Aorta (tissue), 5 donors: ENCODE measurements at regions of chr16 and their contacts with region 1.

Region 1: GRCh38 chr16:352547-353403 is at the start of gene AXIN1:
- DNase-seq: peak; percentile 99 to 100
- ATAC-seq: peak; percentile 95
- H3K4me3 ChIP-seq: peak within 1 kb of the TSS; percentile 67 to 82
- H3K27ac ChIP-seq: peak within 1 kb of the TSS in 1 of 2 donors; percentile 0
- H3K4me1 ChIP-seq: no peaks in the 10 kb centered on the region
- H3K27me3 ChIP-seq: no peaks in the 10 kb centered on the region
- total RNA-seq, gene AXIN1: 17.0 to 19.8 TPM

Region 2: GRCh38 chr16:234468-235305 is 118.1 kb before region 1 on chr16 and contains the start of gene FAM234A:
- intact Hi-C with region 1: loop called in 1 of 2 experiments (anchors 5 kb)
- DNase-seq: peak; percentile 96 to 98
- ATAC-seq: peak; percentile 97
- H3K4me3 ChIP-seq: peak within 1 kb of the TSS; percentile 65 to 93
- H3K27ac ChIP-seq: peak within 1 kb of the TSS; percentile 20 to 84
- H3K4me1 ChIP-seq: no peaks in the 10 kb centered on the region
- H3K27me3 ChIP-seq: no peaks in the 10 kb centered on the region
- total RNA-seq, gene FAM234A: 58.0 to 60.7 TPM

Region 3: GRCh38 chr16:370443-370842 is 17.7 kb after region 1 on chr16 and contains the start of gene MRPL28:
- intact Hi-C with region 1: no loop called
- DNase-seq: peak; percentile 96 to 98
- ATAC-seq: peak; percentile 92
- H3K4me3 ChIP-seq: no peak within 1 kb of the TSS
- H3K27ac ChIP-seq: no peak within 1 kb of the TSS
- H3K4me1 ChIP-seq: no peaks in the 10 kb centered on the region
- H3K27me3 ChIP-seq: no peaks in the 10 kb centered on the region
- total RNA-seq, gene MRPL28: 35.5 to 38.0 TPM

Region 4: DNA sequence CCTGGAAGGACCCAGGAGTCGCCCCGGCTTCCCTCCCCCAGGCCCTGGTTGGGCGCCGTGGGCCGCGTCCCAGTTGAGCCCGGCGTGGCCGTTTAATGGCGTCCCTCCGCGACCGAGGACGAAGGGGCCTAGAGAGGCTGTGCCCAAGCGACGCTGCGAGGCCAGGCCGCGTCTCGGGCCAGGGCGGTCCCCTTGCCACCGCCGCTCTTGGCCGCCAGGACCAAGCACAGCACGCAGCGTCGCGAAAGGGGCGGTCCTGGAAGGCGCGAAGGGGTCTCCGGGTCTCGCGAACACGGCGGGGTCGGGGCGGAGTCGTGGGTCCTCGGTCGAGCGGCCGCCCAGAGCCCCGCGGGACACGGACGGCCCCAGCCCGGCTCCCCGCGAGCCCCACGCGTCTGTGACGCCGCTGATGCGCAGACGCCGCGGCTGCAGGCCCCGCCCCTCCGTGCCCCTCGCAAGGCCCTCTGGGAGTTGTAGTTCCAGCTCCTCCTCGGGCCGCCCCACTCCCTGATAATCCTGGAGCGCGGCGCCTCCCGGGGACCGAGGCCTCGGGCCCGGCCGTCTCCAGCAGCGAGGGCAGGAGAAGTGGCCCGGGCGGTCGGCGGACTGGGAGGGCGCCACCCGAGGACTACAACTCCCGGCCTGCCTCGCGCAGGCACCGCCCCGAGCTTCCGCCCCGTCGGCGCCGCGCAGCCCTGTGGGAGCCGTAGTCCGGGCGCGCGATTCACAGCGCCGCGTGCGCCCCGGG is 174.4 kb after region 1 on chr16 and contains the start of gene CAPN15:
- intact Hi-C with region 1: loop called in 1 of 2 experiments (anchors 1 kb)
- DNase-seq: peak; percentile 92 to 95
- ATAC-seq: peak; percentile 94
- H3K4me3 ChIP-seq: peak within 1 kb of the TSS; percentile 73 to 84
- H3K27ac ChIP-seq: peak within 1 kb of the TSS in 1 of 2 donors; percentile 92
- H3K4me1 ChIP-seq: no peaks in the 10 kb centered on the region
- H3K27me3 ChIP-seq: no peaks in the 10 kb centered on the region
- total RNA-seq, gene CAPN15: 27.9 to 33.9 TPM